ENCODE measurements at regions of chr9 and their contacts with region 1.

Region 1: DNA sequence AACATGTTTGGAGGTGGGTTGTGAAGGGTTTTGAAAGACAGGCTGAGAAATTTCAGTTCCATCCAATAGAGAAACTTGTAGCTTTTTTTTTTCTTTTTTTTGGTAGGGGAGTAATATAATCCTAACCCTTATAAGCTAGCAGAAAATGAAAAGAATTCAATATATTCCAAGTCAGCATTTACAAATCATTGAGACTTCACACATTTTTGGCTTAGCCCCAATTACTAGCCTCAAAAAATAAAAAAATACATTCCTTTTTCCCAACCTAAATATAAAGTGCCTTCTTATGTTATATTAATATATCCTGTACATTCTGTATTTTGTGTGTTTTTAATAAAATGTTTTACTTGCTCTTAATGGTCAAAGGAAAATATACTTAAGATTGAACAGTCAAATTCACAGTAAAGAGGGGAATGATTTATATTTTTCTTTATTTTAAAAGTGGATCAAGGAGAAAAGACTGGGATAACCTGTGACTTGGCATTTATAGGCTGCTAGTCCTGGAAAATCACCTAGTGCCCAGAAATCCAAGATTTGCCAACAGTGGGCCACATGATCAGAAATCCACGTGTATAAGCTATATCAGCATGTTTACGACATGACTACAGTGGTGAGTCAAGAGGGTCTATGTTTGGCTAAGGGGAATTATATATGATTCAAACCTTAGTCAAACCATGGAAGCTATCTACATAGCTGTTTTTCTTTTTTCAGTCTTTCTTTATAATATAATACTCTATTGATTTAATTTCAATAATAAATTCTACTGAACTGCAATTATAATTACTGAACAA is 14.5 kb downstream of the HACD4 start:
- DNase-seq: no peak
- H3K4me3 ChIP-seq: no peak overlapping the region
- H3K27ac ChIP-seq: no peak overlapping the region
- H3K4me1 ChIP-seq: no peaks in the 10 kb centered on the region
- H3K27me3 ChIP-seq: no peaks in the 10 kb centered on the region
- CTCF ChIP-seq: no peak

Region 2: DNA sequence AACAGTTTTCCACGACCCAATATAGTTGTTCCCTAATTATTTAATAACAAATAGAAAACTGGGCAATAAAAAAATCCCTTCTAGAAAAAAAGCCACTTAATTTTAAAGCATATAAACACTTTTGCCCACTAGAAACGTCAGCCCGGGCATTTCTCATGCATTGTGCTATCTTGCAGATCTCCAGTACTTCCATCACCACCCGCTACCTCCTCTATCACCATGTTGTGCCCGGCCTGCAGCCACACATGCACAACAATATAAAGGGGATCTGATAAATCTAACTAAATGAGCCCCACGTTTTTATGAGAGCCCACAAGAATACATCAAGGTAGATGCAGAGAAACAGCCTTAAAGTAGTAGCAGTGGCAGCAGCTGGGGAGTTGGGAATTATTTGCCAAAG is 667.3 kb before region 1 on chr9:
- CTCF ChIA-PET with region 1: no interaction called
- POLR2A ChIA-PET with region 1: no interaction called
- intact Hi-C with region 1: loop called (anchors 5 kb)
- DNase-seq: no peak
- H3K4me3 ChIP-seq: no peak overlapping the region
- H3K27ac ChIP-seq: no peak overlapping the region
- H3K4me1 ChIP-seq: no peaks in the 10 kb centered on the region
- H3K27me3 ChIP-seq: no peaks in the 10 kb centered on the region
- CTCF ChIP-seq: no peak

Measured in PC-9 (cell line).